ENCODE measurements at regions of chrX and their contacts with region 1.

Region 1: GRCh38 chrX:111955901-111956300 is 79.9 kb downstream of the TRPC5OS start:
- DNase-seq: no peak
- H3K4me3 ChIP-seq: no peak overlapping the region
- H3K27ac ChIP-seq: no peak overlapping the region
- H3K4me1 ChIP-seq: no peaks in the 10 kb centered on the region
- H3K27me3 ChIP-seq: no peaks in the 10 kb centered on the region
- CTCF ChIP-seq: no peak

Region 2: DNA sequence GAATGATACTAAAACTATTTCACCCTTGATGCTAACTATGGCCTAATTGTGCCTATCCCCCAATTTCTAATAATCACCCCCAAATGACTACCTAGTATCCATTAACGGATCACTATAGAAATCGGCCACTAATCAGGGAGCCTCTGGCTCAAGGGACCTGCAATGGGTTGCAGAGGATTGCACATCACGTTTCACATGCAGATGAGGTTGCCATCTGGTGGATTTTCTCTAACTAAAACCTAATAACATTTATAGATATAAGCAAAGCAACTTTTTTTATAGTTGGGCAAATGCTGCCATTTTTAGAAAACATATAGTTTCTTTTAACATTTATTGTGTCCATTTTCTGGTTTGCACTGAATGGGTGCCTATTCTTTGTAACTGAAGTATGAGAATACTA is 303.2 kb before region 1 on chrX:
- CTCF ChIA-PET with region 1: no interaction called
- POLR2A ChIA-PET with region 1: no interaction called
- intact Hi-C with region 1: no loop called
- DNase-seq: no peak
- H3K4me3 ChIP-seq: no peak overlapping the region
- H3K27ac ChIP-seq: no peak overlapping the region
- H3K4me1 ChIP-seq: no peaks in the 10 kb centered on the region
- H3K27me3 ChIP-seq: no peaks in the 10 kb centered on the region
- CTCF ChIP-seq: no peak

Region 3: DNA sequence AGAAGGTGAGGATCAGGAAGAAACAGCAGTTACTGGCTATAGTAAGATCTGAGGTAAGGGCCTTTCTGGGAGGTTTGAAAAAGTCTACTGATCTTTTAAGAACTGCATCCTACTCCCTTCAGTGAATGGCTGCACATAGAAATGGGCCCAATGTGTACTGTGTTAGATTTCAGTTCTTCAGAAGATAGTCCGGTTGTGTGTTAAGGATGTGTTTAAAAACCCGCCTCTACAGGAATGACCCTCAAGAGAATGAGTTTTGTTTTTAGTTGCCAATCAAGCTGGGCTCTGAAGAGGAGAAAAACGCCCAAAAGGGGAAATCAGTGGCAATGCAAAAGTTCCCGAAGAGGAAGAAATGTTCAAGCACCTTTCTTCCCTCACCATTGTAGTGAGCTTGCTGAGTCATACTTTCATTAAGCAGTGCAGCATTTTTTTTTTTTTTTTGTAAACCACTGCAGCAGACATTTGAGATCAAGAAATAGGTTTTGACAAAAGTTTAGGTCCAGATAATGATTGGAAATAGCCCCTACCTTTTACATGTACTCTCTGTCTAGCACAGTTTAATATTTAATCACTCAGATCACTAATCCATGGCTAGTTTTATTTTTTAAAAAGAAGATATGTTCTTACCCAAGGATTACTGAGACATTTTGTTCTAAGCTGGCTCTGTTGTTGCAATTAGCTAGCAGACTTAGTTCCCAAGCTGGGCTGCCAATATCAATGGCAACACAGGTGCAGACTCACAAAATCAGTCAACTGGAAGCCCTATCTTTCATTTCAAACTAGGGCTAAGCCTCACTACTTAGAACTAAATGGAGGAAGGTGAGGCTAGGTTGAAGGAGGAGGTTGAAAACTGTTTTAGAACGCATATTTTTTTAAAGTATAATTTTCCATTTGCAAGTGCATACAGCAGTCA is 86.9 kb before region 1 on chrX:
- CTCF ChIA-PET with region 1: interaction called, 12 read pairs
- POLR2A ChIA-PET with region 1: no interaction called
- intact Hi-C with region 1: no loop called
- DNase-seq: peak in 1 of 2 experiments; percentile 37
- H3K4me3 ChIP-seq: no peak overlapping the region
- H3K27ac ChIP-seq: peak overlapping the region; percentile 5; the same call in 1 of the 2 replicates
- H3K4me1 ChIP-seq: peaks cover 9% of the 10 kb centered on the region; the same call in 1 of the 2 replicates
- H3K27me3 ChIP-seq: no peaks in the 10 kb centered on the region
- CTCF ChIP-seq: no peak

Region 4: DNA sequence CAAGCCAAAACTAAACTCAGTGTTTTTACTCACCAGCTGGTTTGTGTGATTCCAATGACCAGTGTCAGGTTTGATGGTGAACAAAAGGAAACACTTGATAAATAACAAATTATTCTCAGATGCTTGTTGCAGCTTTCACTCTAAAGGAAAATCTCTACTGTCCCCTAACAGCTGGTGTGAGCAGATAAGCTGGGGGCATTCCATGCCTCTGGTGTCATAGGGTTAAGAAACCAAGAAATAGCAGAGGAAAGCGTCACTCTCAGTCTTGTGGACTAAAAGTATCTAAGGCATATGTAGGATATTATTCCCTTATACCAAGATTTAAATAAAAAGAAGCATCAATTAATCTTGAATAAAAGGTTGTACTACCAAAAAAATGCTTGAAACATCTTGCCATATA is 102.4 kb after region 1 on chrX:
- CTCF ChIA-PET with region 1: no interaction called
- POLR2A ChIA-PET with region 1: no interaction called
- intact Hi-C with region 1: no loop called
- DNase-seq: no peak
- H3K4me3 ChIP-seq: no peak overlapping the region
- H3K27ac ChIP-seq: no peak overlapping the region
- H3K4me1 ChIP-seq: no peaks in the 10 kb centered on the region
- H3K27me3 ChIP-seq: no peaks in the 10 kb centered on the region
- CTCF ChIP-seq: no peak

Measured in PC-9 (cell line).